Right lobe of liver (tissue), 6 donors: ENCODE measurements at regions of chr1 and their contacts with region 1.

Region 1: DNA sequence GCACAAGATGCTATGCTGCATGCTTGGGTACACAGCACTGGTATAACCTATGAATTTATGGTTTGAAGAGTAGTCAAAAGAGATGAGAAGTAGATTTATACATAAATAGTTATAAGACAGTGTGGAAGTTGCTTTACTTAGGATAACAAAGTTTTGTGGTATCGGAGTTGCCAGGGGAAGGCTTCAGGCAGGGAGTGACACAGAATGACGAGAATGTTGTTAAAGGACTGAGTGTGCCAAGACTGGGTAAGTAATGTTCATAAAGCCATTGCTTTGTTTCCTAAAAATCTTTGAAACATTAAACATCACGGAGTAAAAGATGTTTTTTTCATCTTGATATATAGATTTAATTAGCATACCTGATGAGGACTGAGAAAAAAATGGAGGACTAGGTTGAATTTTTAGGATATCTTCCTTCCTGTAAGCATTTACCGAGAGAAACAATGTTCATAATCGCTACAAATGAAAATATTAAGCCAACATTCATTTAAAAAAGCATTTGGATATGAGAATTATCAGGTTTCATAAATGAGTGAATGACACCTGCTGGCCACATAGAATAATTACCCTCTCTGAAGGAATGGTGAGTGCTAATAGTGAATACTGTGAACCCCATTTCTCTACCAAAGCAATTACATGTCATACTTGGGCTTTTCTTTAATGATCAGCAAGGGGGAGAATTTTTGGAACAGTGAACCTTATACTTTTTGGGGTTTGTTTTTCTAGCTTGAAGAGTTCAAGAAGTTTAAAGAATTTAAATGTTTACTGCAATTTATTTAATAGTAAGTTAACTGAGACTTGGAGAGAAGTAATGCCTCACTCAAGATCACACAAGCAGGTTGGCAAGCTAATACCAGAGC is 28.4 kb downstream of the EXTL2 start:
- DNase-seq: no peak
- ATAC-seq: peak; percentile 77 to 85 (median 80)
- H3K4me3 ChIP-seq: no peak overlapping the region
- H3K27ac ChIP-seq: no peak overlapping the region
- H3K4me1 ChIP-seq: no peaks in the 10 kb centered on the region
- H3K27me3 ChIP-seq: no peaks in the 10 kb centered on the region
- CTCF ChIP-seq: peak; percentile 56 to 74 (median 63)
- POLR2A ChIP-seq: no peak

Region 2: DNA sequence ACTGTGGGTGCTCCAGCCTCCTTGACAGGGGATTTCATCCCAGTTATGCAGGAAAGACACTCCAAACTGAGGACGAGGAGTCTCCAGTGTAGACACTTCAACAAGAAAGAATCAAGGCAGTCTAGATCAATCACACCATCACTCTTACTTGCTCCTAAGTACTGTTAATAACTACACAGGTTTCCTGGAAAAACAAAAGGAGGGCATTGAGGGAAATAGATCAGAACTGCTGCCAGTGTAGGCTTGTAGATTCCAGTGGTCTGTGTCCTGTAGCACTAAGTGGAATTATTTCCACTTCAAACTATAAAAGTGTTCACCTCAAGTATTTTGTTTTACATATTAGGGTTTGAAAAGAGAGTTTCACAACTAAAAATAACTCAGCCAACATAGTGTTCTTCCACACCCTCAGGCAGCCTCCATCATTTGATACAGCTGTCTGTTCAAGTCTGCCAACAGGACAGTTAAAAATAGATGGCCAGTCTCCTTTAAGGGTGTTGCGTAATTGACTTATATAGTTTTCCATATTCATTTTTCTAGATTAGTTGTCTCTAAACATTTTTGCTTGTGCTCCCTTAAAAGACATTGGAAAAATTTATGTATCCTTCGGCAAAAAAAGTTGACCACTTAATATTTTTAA is 1048.1 kb before region 1 on chr1:
- intact Hi-C with region 1: loop called in 1 of 2 experiments (anchors 10 kb)
- DNase-seq: no peak
- ATAC-seq: no peak
- H3K4me3 ChIP-seq: no peak overlapping the region
- H3K27ac ChIP-seq: no peak overlapping the region
- H3K4me1 ChIP-seq: no peaks in the 10 kb centered on the region
- H3K27me3 ChIP-seq: no peaks in the 10 kb centered on the region
- CTCF ChIP-seq: no peak
- POLR2A ChIP-seq: no peak

Region 3: DNA sequence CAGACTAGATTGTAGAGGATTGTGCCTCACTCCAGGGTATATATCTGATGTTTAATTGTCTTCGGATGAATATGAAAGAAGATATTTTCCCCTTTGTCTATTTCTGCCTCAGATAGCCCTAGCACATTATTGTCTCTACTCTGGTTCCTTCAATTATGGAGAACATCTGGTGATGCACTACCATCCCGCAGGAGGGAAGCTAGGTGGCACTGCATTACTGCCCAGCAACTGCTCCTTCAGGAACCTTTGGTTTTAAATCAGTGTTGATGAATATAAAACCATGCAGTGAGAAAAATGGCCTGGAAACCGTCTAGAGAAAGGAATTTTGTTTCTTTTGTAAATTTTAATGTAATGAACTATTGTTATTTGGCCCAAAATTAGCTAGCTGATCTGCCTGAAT is 259.8 kb before region 1 on chr1:
- intact Hi-C with region 1: loop called (anchors 10 kb)
- DNase-seq: peak; percentile 52 to 57 (median 56)
- ATAC-seq: peak; percentile 95 to 99 (median 98)
- H3K4me3 ChIP-seq: no peak overlapping the region
- H3K27ac ChIP-seq: no peak overlapping the region
- H3K4me1 ChIP-seq: no peaks in the 10 kb centered on the region
- H3K27me3 ChIP-seq: no peaks in the 10 kb centered on the region
- CTCF ChIP-seq: peak; percentile 79 to 89 (median 86)
- POLR2A ChIP-seq: no peak

Region 4: DNA sequence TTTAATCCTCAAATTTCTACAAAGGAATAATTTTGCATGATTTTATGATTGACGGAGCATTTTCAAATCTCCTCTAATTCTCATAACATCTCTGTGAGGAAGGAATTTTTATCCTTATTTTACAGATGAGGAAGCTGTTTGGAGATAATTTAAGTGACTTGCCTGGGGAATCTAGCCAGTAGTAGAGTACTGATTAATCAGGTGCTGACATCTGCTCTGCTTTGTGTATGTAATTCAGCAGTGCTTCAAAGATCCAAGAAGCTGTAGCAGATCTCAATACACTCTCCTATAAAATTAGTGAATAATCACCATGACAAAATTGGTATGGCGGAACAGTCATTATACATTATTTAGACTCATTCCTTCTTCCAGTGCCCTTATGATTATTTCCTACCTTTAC is 113.4 kb after region 1 on chr1:
- intact Hi-C with region 1: no loop called
- DNase-seq: no peak
- ATAC-seq: no peak
- H3K4me3 ChIP-seq: no peak overlapping the region
- H3K27ac ChIP-seq: no peak overlapping the region
- H3K4me1 ChIP-seq: no peaks in the 10 kb centered on the region
- H3K27me3 ChIP-seq: no peaks in the 10 kb centered on the region
- CTCF ChIP-seq: no peak
- POLR2A ChIP-seq: no peak